Left cardiac atrium (tissue), 4 donors: ENCODE measurements at regions of chr6 and their contacts with region 1.

Region 1: GRCh38 chr6:38871741-38872568 is 156.8 kb downstream of the DNAH8 start:
- DNase-seq: peak; percentile 32
- ATAC-seq: peak in 1 of 2 donors; percentile 52

Region 2: GRCh38 chr6:39166189-39166911 is 294.4 kb after region 1 on chr6:
- intact Hi-C with region 1: loop called in 1 of 2 experiments (anchors 5 kb)
- DNase-seq: peak; percentile 79
- ATAC-seq: peak; percentile 84 to 85

Region 3: DNA sequence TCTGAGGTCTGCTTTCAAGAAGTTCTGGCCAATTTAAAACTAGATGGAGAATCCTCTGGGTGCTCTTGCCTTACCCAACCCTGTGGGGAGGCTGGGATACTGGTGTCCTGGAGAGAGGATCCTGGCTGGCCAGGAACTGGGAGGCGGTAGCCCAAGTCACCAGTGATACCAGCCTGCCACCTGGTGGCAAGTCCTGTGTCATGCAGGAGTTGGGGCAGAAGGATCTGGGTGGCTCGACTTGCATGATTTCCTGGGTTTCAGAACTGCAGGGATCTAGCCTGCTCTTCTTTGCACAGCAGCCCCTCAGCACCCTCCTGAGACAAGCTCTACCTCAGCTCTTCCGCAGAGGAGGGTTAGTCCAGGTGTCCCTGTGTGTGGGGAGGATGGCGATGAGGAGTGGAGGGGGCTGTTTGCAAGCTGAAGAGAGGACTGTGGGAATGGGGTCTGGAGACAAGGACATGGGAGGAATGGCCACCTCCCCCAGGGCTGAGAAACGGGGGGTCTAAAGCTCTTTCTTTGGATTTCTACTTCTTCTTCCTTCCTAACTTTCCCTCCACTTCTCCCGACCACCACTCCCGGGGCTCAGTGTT is 438.1 kb after region 1 on chr6:
- intact Hi-C with region 1: loop called (anchors 5 to 10 kb)
- DNase-seq: peak; percentile 77
- ATAC-seq: peak; percentile 68 to 73